Kidney (tissue), 22 donors: ENCODE measurements at regions of chr14 and their contacts with region 1.

Region 1: GRCh38 chr14:22986508-22987054 is 4.2 kb upstream of the AJUBA start:
- DNase-seq: peak; percentile 90 to 95 (median 92)
- H3K4me3 ChIP-seq: no peak overlapping the region
- H3K27ac ChIP-seq: no peak overlapping the region
- H3K4me1 ChIP-seq: peaks cover 0 to 4% (median 0%) of the 10 kb centered on the region in 3 donors
- H3K27me3 ChIP-seq: no peaks in the 10 kb centered on the region
- CTCF ChIP-seq: peak; percentile 98

Region 2: DNA sequence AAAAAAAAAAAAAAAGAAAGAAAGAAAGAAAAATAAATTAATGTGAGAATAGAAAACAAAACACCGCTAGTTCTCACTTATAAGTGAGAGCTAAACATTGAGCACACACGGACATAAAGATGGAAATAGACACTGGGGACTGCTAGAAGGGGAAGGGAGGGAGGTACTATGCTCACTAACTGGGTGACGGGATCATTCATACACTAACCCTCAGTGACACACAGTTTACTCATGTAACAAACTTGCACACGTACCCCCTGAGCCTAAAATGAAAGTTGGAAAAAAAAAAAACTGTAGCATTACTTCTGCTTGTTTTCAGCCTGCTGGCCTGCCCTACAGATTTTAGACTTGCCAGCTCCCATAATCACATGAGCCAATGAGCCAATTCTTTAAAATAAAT is 46.9 kb before region 1 on chr14:
- intact Hi-C with region 1: no loop called
- DNase-seq: no peak
- H3K4me3 ChIP-seq: no peak overlapping the region
- H3K27ac ChIP-seq: no peak overlapping the region
- H3K4me1 ChIP-seq: no peaks in the 10 kb centered on the region
- H3K27me3 ChIP-seq: no peaks in the 10 kb centered on the region
- CTCF ChIP-seq: no peak

Region 3: DNA sequence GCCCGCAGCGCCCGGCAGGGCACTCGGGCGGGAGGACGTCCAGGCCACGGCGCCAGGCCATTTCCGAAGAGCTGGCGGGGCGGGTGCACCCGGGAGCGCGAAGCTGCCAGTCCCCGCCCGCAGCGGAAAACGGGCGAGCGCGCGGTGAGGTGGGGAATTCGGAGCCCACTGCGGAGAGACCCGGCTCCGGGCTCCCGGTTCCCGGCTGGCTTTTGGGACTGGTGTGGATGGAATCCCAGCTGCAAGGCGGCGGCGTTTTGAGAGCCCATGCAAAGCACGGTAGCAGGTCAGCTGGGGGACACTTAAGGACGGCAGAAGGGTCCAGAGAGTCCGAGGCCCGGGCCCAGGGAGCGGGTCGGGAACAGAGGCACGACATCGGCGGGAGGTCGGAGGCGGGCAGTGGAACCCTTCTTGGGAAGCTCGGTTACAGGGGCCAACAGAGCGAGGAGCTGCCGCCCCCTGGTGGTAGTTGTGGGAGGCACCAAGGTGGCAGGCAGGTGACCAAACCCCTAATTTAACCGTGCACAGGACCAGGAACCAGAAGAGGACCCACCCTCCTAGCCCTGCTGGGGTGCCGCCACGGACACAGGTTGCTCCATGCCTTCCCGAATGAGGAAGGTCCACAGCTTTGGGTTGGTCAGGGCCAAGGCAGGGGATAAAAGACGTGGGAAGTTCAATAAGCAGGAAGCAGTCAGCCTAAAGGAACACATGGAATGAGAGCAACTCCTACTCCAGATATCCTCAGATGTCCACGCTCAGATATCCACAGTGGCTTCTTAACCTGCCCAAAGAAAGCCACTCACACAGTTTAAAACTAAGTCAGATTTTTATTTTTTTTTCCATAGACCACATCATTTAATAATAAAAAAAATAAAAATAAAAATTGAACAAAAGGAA is 71.4 kb after region 1 on chr14:
- intact Hi-C with region 1: loop called (anchors 5 kb)
- DNase-seq: peak; percentile 94 to 96 (median 96)
- H3K4me3 ChIP-seq: peak overlapping the region; percentile 36 to 71 (median 56)
- H3K27ac ChIP-seq: peak overlapping the region in 1 of 2 donors; percentile 41
- H3K4me1 ChIP-seq: peaks cover 0 to 13% (median 8%) of the 10 kb centered on the region in 3 donors
- H3K27me3 ChIP-seq: no peaks in the 10 kb centered on the region
- CTCF ChIP-seq: peak; percentile 92

Region 4: GRCh38 chr14:23275412-23275811 is 288.8 kb after region 1 on chr14:
- intact Hi-C with region 1: no loop called
- DNase-seq: no peak
- H3K4me3 ChIP-seq: no peak overlapping the region
- H3K27ac ChIP-seq: no peak overlapping the region
- H3K4me1 ChIP-seq: peaks cover 0 to 5% (median 0%) of the 10 kb centered on the region in 3 donors
- H3K27me3 ChIP-seq: no peaks in the 10 kb centered on the region
- CTCF ChIP-seq: no peak